H1 (cell line): ENCODE measurements at regions of chr11 and their contacts with region 1.

Region 1: GRCh38 chr11:662689-663274 is 25.7 kb downstream of the DRD4 start:
- DNase-seq: peak in 1 of 2 experiments; percentile 83
- H3K4me3 ChIP-seq: no peak overlapping the region
- H3K27ac ChIP-seq: no peak overlapping the region
- H3K4me1 ChIP-seq: no peaks in the 10 kb centered on the region
- H3K27me3 ChIP-seq: no peaks in the 10 kb centered on the region
- CTCF ChIP-seq: peak; percentile 93 to 96 (median 94)
- EP300 ChIP-seq: no peak
- POLR2A ChIP-seq: no peak
- RAD21 ChIP-seq: peak; percentile 87 to 90

Region 2: GRCh38 chr11:560305-561147 is 102.3 kb before region 1 on chr11 and contains the starts of genes LMNTD2 and RASSF7:
- CTCF ChIA-PET with region 1: no interaction called
- POLR2A ChIA-PET with region 1: no interaction called
- DNase-seq: peak; percentile 73 to 98
- H3K4me3 ChIP-seq: peak within 1 kb of the TSS; percentile 63 to 95 (median 77)
- H3K27ac ChIP-seq: no peak within 1 kb of the TSS; the same call in 1 of the 2 replicates
- H3K4me1 ChIP-seq: peaks cover 0 to 32% (median 12%) of the 10 kb centered on the region in 4 experiments; a peak in 6 of 7 replicates
- H3K27me3 ChIP-seq: peaks cover 13 to 28% (median 25%) of the 10 kb centered on the region in 4 experiments
- CTCF ChIP-seq: no peak
- EP300 ChIP-seq: no peak
- POLR2A ChIP-seq: 0 out of 3 replicates have a peak, but pooled peaks of 1 of the 2 experiments have one; percentile 12
- RAD21 ChIP-seq: no peak
- total RNA-seq, gene LMNTD2: 2.6 and 3.1 TPM in 2 replicates
- total RNA-seq, gene RASSF7: 20.6 and 22.3 TPM in 2 replicates

Region 3: DNA sequence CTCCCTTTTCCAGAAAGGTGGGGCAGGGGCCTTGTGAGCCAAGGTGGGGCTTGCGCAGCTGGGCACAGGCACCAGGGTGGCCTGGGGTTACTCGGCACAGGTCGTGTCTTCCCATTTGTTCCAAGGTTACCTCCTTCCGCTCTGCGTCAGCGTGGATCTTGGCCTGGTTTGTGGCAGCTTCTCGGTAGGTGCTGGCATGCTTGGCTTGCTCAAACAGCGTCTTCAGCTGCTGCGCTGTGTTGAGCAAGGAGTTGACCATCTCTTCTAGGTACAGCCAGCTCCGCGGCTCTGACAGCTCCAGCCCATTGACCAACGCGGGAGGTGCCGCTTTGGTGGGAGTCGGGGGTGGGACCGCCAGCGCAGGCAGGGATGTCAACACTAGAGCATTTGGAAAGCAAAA is 11.6 kb after region 1 on chr11:
- CTCF ChIA-PET with region 1: interaction called, 13 read pairs
- POLR2A ChIA-PET with region 1: interaction called, 5 read pairs
- DNase-seq: no peak
- H3K4me3 ChIP-seq: no peak overlapping the region
- H3K27ac ChIP-seq: no peak overlapping the region
- H3K4me1 ChIP-seq: no peaks in the 10 kb centered on the region
- H3K27me3 ChIP-seq: no peaks in the 10 kb centered on the region
- CTCF ChIP-seq: no peak
- EP300 ChIP-seq: no peak
- POLR2A ChIP-seq: no peak
- RAD21 ChIP-seq: no peak

Region 4: DNA sequence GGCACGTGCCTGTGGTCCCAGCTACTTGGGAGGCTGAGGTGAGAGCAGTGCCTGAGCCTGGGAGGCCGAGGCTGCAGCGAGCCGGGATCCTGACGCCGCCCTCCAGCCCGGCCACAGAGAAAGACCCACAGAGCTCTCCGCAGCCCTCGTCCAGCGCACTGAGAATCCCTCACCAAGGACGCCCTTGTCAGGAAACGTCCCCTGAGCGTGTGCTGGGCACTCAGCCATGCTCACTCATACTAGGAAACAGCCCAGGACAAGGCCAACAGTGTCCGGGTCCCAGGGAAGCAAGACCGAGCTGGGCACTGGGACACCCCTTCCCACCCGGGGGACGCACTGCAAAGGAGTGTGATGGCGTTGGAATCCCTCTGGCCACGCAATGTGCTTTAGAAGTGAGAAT is 17.7 kb after region 1 on chr11:
- CTCF ChIA-PET with region 1: interaction called, 15 read pairs
- POLR2A ChIA-PET with region 1: interaction called, 3 read pairs
- DNase-seq: no peak
- H3K4me3 ChIP-seq: no peak overlapping the region
- H3K27ac ChIP-seq: no peak overlapping the region
- H3K4me1 ChIP-seq: peaks cover 0 to 2% (median 0%) of the 10 kb centered on the region in 4 experiments; a peak in 3 of 7 replicates
- H3K27me3 ChIP-seq: no peaks in the 10 kb centered on the region
- CTCF ChIP-seq: no peak
- EP300 ChIP-seq: no peak
- POLR2A ChIP-seq: no peak
- RAD21 ChIP-seq: no peak